Mammary epithelial cell (primary cell): ENCODE measurements at regions of chr4 and their contacts with region 1.

Region 1: DNA sequence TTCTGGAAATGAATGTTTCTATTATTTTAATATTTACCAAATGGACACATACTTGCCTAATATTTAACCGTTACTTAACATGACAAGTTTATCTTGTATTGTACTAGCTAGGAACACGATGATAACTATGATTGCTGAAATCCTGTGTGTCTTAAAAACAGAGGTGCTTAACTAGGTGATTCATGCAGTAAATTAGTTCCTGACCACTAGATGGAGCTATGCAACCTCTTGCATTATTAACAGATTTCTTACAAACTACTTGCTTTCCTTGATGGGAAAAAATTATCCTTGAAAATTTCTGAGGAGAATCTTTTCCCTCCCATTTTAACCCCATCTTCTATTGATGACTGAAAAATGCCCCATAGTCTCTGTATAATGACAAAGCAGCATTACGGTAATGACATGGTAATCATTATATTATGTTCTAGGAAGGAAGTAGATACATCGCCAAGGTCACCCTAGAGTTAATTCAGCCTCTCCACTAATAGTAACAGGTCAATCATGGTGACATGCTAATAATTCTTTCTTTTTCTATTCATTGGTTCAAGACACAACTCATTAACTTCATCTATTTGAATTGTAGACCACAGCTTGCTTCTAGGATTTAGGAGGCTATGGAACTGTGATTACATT is 844.2 kb downstream of the RAPGEF2 start:
- DNase-seq: peak; percentile 62
- H3K4me3 ChIP-seq: no peak overlapping the region
- H3K27ac ChIP-seq: no peak overlapping the region
- H3K4me1 ChIP-seq: no peaks in the 10 kb centered on the region
- H3K27me3 ChIP-seq: no peaks in the 10 kb centered on the region
- CTCF ChIP-seq: peak; percentile 75 to 79

Region 2: DNA sequence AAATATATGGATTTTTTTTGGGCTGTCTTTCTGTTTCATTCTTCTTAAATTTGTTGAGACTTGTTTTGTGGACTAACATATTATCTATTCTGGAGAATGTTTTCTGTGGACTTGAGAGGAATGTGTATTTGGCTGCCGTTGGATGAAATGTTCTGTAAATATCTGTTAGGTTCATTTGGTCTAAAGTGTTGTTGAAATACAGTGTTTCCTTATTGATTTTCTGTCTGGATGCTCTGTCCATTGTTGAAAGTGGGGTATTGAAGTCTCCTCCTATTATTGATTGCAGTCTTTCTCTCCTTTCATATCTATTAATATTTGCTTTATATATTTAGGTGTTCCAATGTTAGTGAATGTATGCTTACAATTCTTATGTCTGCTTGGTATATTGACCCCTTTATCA is 412.4 kb before region 1 on chr4:
- CTCF ChIA-PET with region 1: no interaction called
- dilution Hi-C with region 1: no loop called
- in situ Hi-C with region 1: no loop called
- intact Hi-C with region 1: no loop called
- DNase-seq: no peak
- H3K4me3 ChIP-seq: no peak overlapping the region
- H3K27ac ChIP-seq: no peak overlapping the region
- H3K4me1 ChIP-seq: no peaks in the 10 kb centered on the region
- H3K27me3 ChIP-seq: peaks cover 7% of the 10 kb centered on the region
- CTCF ChIP-seq: no peak

Region 3: DNA sequence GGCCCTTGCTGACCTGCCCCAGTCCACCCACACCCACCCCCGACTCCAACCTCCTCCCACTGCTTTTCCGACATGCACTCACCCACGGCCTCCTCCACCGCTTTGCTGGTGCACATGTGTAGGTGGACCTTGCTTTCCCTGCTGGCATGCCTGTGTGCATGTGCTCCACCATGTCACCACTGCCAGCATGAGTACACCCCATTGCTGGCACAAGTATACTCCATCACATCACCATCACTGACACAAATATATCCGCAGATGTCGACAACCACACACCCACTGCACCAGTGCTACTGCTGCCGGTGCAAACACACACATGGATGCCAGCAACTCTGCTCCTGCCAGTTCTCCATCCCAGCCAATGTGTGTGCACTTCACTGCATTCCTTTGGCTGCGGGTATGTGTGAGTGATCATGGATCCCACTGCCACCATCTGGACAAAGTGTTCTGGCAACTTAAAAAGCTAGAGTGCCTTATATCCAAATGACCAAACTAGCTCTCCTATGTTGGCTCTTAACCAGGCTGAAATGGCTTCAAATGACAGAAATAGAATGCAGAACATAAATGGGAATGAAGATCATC is 228.1 kb after region 1 on chr4:
- CTCF ChIA-PET with region 1: no interaction called
- dilution Hi-C with region 1: no loop called
- in situ Hi-C with region 1: no loop called
- intact Hi-C with region 1: loop called (anchors 1 kb)
- DNase-seq: peak; percentile 6
- H3K4me3 ChIP-seq: no peak overlapping the region
- H3K27ac ChIP-seq: no peak overlapping the region
- H3K4me1 ChIP-seq: peaks cover 3% of the 10 kb centered on the region
- H3K27me3 ChIP-seq: no peaks in the 10 kb centered on the region
- CTCF ChIP-seq: peak; percentile 5 to 47